ENCODE measurements at regions of chr13 and their contacts with region 1.

Region 1: DNA sequence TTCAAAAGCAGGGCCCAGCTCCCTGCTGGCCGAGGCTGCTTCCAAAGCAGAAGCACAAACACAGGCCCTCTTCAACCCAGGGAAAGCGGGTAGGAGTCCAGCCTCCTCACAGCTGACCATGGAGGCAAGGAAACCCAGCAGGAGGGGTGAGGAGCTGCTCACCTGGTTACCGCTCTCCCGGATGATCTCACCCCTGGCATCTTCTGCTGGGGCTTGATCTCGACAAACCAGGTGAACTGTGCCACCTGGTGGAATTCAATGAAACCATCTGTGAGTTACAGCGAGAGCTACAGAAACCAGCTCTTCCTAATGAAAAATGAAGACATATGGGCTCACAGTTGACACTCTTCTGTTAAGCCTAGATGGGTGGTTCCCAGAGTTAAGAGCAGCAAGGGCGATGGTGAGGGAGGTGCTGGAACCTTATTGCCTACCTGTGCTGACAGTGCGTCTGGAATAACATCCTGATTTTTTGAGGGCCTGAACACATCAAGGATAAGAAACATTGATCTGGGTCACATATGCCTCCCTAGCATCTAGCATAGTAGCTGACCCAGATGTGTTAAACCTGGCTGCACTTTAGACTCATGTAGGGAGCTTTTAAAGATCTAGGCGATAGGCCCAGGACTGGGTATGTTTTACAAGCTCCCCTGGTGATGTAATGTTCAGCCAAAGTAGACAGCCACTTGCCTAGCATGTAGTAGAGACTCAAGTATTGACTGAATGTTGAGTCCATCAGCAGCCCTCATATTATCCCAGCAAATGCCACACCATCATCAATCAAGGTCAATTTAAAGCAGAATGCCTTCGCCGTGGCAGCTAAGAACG is 6.1 kb downstream of the DHRS12 start:
- DNase-seq: peak in 8 of 9 experiments; percentile 30 to 81 (median 58)
- ATAC-seq: peak; percentile 60
- H3K4me3 ChIP-seq: no peak overlapping the region
- H3K4me3 Mint-ChIP-seq: no peak overlapping the region
- H3K27ac ChIP-seq: no peak overlapping the region
- H3K27ac Mint-ChIP-seq: peak overlapping the region; percentile 62
- H3K4me1 ChIP-seq: peaks cover 20% of the 10 kb centered on the region
- H3K4me1 Mint-ChIP-seq: peaks cover 26% of the 10 kb centered on the region
- H3K27me3 ChIP-seq: no peaks in the 10 kb centered on the region
- H3K27me3 Mint-ChIP-seq: no peaks in the 10 kb centered on the region
- CTCF ChIP-seq: peak; percentile 51

Region 2: DNA sequence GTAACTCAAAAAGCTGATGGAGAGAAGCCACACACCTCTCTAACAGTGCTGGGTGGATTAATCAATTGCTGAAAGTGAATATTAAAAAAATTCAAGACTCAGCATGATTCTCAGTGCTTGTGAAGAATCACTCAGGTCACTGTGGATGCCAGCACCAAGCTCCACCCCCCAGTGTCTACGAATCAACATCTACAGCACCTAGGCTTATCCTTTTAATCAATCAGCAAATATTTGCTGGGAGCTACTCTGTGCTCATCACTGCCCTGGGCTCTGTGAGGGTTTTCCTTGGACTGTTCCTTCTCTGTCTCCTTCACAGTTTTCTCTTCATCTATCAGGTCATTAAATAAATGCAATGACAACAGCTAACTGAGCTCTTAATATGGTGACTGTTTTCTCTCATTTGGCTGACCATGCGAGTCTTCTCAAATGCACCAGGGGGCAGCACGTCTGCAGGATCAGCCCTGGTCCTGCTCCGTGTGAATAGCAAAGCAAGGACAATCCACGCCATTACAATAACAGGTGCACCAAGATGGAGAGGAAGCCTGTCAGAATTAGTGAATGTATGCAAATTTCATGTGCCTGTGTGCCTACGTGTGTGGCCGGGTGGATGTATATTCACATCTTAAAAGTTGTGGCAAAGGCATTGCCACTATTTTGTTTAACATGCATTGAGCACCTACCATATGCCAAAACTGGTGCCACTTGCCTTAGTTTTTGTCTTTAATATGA is 672.2 kb before region 1 on chr13:
- CTCF ChIA-PET with region 1: interaction called, 7 read pairs
- POLR2A ChIA-PET with region 1: no interaction called
- intact Hi-C with region 1: loop called in 1 of 2 experiments (anchors 5 kb)
- DNase-seq: peak in 4 of 9 experiments; percentile 23 to 60 (median 39)
- ATAC-seq: peak; percentile 57
- H3K4me3 ChIP-seq: no peak overlapping the region
- H3K4me3 Mint-ChIP-seq: no peak overlapping the region
- H3K27ac ChIP-seq: no peak overlapping the region
- H3K27ac Mint-ChIP-seq: no peak overlapping the region
- H3K4me1 ChIP-seq: no peaks in the 10 kb centered on the region
- H3K4me1 Mint-ChIP-seq: peaks cover 3% of the 10 kb centered on the region
- H3K27me3 ChIP-seq: no peaks in the 10 kb centered on the region
- H3K27me3 Mint-ChIP-seq: peaks cover 14% of the 10 kb centered on the region
- CTCF ChIP-seq: peak; percentile 48

Region 3: GRCh38 chr13:51444922-51445321 is 353.0 kb before region 1 on chr13:
- CTCF ChIA-PET with region 1: interaction called, 21 read pairs
- POLR2A ChIA-PET with region 1: no interaction called
- intact Hi-C with region 1: no loop called
- DNase-seq: peak in 2 of 9 experiments; percentile 44 to 58
- ATAC-seq: no peak
- H3K4me3 ChIP-seq: no peak overlapping the region
- H3K4me3 Mint-ChIP-seq: no peak overlapping the region
- H3K27ac ChIP-seq: no peak overlapping the region
- H3K27ac Mint-ChIP-seq: no peak overlapping the region
- H3K4me1 ChIP-seq: peaks cover 7% of the 10 kb centered on the region
- H3K4me1 Mint-ChIP-seq: peaks cover 27% of the 10 kb centered on the region
- H3K27me3 ChIP-seq: no peaks in the 10 kb centered on the region
- H3K27me3 Mint-ChIP-seq: no peaks in the 10 kb centered on the region
- CTCF ChIP-seq: no peak

Region 4: GRCh38 chr13:51729866-51730546 is 67.9 kb before region 1 on chr13:
- CTCF ChIA-PET with region 1: no interaction called
- POLR2A ChIA-PET with region 1: no interaction called
- intact Hi-C with region 1: loop called in 1 of 2 experiments (anchors 10 kb)
- DNase-seq: no peak
- ATAC-seq: no peak
- H3K4me3 ChIP-seq: no peak overlapping the region
- H3K4me3 Mint-ChIP-seq: no peak overlapping the region
- H3K27ac ChIP-seq: no peak overlapping the region
- H3K27ac Mint-ChIP-seq: no peak overlapping the region
- H3K4me1 ChIP-seq: no peaks in the 10 kb centered on the region
- H3K4me1 Mint-ChIP-seq: peaks cover 5% of the 10 kb centered on the region
- H3K27me3 ChIP-seq: no peaks in the 10 kb centered on the region
- H3K27me3 Mint-ChIP-seq: no peaks in the 10 kb centered on the region
- CTCF ChIP-seq: no peak

Region 5: DNA sequence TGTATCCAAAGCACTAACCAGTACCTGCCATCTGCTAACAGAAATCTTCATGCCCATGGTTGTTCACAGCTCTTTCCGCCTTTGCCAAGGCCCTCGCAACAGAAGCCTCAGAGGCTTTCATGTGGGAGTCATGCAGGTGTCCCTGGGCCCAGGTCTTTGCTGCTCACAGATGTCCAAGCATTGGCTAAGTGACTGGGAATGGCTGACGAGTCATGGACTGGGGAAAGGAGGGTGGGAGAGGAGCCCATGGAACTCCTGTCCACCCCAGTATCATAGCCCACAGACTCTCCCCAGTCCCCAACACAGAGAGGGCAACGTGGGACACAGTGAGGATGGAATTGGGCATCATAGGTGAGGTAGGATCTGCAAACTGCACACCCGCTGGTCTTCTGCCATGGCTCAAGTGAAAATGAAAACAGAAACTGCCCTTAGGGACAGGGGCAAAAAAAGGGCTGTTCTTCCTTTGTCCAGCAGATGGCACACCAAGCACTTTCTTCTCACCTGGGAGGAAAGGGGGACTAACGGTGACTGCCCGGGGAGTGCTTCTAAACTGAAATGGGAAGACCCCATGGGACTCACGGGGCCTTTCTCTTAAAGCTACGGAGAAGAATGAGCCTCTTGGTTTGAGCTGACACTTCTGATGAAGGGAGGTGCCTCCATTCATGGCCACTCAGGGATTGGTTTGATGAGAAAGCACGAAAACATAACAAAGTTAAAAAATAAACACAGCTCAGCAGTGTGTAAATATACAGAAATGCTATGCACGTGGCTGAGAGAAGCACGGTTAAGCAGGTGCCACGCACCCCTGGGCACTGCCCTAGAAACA is 17.2 kb after region 1 on chr13:
- CTCF ChIA-PET with region 1: interaction called, 12 read pairs
- POLR2A ChIA-PET with region 1: interaction called, 143 read pairs
- intact Hi-C with region 1: no loop called
- DNase-seq: peak; percentile 49 to 89 (median 76)
- ATAC-seq: peak; percentile 82
- H3K4me3 ChIP-seq: peak overlapping the region; percentile 12 to 23
- H3K4me3 Mint-ChIP-seq: peak overlapping the region; percentile 70
- H3K27ac ChIP-seq: peak overlapping the region in 1 of 2 experiments; percentile 18
- H3K27ac Mint-ChIP-seq: peak overlapping the region; percentile 92
- H3K4me1 ChIP-seq: peaks cover 63% of the 10 kb centered on the region
- H3K4me1 Mint-ChIP-seq: peaks cover 79% of the 10 kb centered on the region
- H3K27me3 ChIP-seq: no peaks in the 10 kb centered on the region
- H3K27me3 Mint-ChIP-seq: no peaks in the 10 kb centered on the region
- CTCF ChIP-seq: peak; percentile 92

Region 6: GRCh38 chr13:51844862-51845573 is 47.1 kb after region 1 on chr13 and contains the start of gene TMEM272:
- CTCF ChIA-PET with region 1: no interaction called
- POLR2A ChIA-PET with region 1: no interaction called
- intact Hi-C with region 1: no loop called
- DNase-seq: peak in 7 of 9 experiments; percentile 35 to 63 (median 54)
- ATAC-seq: peak; percentile 96
- H3K4me3 ChIP-seq: no peak within 1 kb of the TSS
- H3K4me3 Mint-ChIP-seq: peak within 1 kb of the TSS; percentile 53
- H3K27ac ChIP-seq: no peak within 1 kb of the TSS
- H3K27ac Mint-ChIP-seq: no peak within 1 kb of the TSS
- H3K4me1 ChIP-seq: peaks cover 5% of the 10 kb centered on the region
- H3K4me1 Mint-ChIP-seq: peaks cover 8% of the 10 kb centered on the region
- H3K27me3 ChIP-seq: no peaks in the 10 kb centered on the region
- H3K27me3 Mint-ChIP-seq: peaks cover 4% of the 10 kb centered on the region
- CTCF ChIP-seq: peak; percentile 83
- total RNA-seq, gene TMEM272: 1.1 to 1.7 TPM

Region 7: GRCh38 chr13:52022356-52022755 is 224.5 kb after region 1 on chr13:
- CTCF ChIA-PET with region 1: no interaction called
- POLR2A ChIA-PET with region 1: no interaction called
- intact Hi-C with region 1: no loop called
- DNase-seq: no peak
- ATAC-seq: no peak
- H3K4me3 ChIP-seq: no peak overlapping the region
- H3K4me3 Mint-ChIP-seq: no peak overlapping the region
- H3K27ac ChIP-seq: no peak overlapping the region
- H3K27ac Mint-ChIP-seq: no peak overlapping the region
- H3K4me1 ChIP-seq: no peaks in the 10 kb centered on the region
- H3K4me1 Mint-ChIP-seq: peaks cover 47% of the 10 kb centered on the region
- H3K27me3 ChIP-seq: no peaks in the 10 kb centered on the region
- H3K27me3 Mint-ChIP-seq: no peaks in the 10 kb centered on the region
- CTCF ChIP-seq: no peak

Measured in CD8-positive, alpha-beta T cell (primary cell).